WTC11 (cell line): ENCODE measurements at regions of chr15 and their contacts with region 1.

Region 1: DNA sequence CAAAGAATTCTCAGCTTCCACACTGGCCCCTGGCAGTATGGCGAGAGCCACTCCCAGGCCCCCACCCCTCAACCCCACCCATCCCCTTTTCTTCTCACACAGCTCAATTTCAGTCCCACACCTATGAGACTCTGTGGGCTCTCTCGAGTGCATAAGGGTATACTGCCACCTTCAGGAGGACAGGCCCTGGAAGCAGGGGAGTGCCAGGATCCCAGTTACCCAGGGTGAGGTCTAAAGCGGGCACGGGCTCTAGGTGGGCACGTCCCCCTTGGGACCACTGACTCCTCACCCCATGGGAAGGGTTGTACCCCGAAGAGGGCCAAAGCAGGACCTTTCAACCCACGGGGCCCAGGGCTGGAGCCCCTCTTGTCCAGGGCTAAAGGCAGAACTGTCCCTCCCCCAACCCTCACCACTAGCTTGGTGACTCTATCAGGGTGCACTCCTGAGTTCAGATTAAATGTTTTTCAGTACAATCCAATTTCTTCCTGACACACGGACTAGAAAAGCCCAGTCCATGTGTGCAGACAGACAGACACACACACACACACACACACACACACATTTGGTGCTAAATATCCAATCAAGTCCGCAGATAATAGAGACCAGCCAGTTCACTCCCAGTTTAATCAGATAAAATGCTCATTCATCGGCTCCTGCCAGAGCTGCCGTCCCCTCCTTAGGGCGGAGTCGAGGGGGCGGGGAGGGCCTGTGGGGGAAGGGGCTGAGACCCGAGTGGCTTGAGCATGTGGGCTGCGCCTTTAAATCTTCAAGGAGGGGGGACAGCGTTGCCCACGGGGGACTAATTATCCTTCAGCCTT is 59.4 kb downstream of the CYP11A1 start:
- DNase-seq: peak; percentile 63
- ATAC-seq: peak; percentile 66
- H3K4me3 Mint-ChIP-seq: peak overlapping the region; percentile 31
- H3K27ac Mint-ChIP-seq: no peak overlapping the region
- H3K4me1 Mint-ChIP-seq: peaks cover 71% of the 10 kb centered on the region
- H3K27me3 Mint-ChIP-seq: peaks cover 32% of the 10 kb centered on the region
- CTCF ChIP-seq: peak; percentile 16; the same call in 1 of the 2 replicates

Region 2: GRCh38 chr15:74127260-74127953 is 180.6 kb before region 1 on chr15:
- CTCF ChIA-PET with region 1: interaction called, 89 read pairs
- POLR2A ChIA-PET with region 1: interaction called, 4 read pairs
- DNase-seq: peak; percentile 98
- ATAC-seq: peak; percentile 69
- H3K4me3 Mint-ChIP-seq: peak overlapping the region; percentile 73
- H3K27ac Mint-ChIP-seq: no peak overlapping the region
- H3K4me1 Mint-ChIP-seq: peaks cover 60% of the 10 kb centered on the region
- H3K27me3 Mint-ChIP-seq: peaks cover 76% of the 10 kb centered on the region
- CTCF ChIP-seq: peak; percentile 99

Region 3: GRCh38 chr15:74172701-74173379 is 135.2 kb before region 1 on chr15:
- CTCF ChIA-PET with region 1: interaction called, 21 read pairs
- POLR2A ChIA-PET with region 1: no interaction called
- DNase-seq: peak; percentile 36
- ATAC-seq: peak; percentile 23
- H3K4me3 Mint-ChIP-seq: no peak overlapping the region
- H3K27ac Mint-ChIP-seq: no peak overlapping the region
- H3K4me1 Mint-ChIP-seq: peaks cover 53% of the 10 kb centered on the region
- H3K27me3 Mint-ChIP-seq: peaks cover 3% of the 10 kb centered on the region; the same call in 1 of the 2 replicates
- CTCF ChIP-seq: no peak

Region 4: DNA sequence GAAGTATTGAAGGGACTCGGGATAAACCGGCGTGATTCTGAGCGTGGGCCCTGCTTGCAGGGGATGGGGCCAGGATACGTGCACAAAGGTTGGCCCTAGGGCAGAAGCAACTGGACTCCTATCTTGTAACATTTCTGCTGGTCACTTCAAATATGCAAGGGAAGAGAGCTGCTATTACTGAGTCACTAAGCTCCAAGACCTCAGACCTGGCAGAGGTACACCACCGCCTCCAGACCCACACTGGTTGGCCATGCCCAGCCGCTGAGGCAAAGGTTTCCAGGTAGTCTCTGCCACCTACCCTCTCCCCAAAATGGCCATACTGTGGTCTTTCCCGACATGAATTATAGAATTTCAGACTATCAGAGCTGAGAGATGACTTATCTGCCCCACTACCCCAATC is 92.1 kb before region 1 on chr15:
- CTCF ChIA-PET with region 1: interaction called, 53 read pairs
- POLR2A ChIA-PET with region 1: interaction called, 4 read pairs
- DNase-seq: no peak
- ATAC-seq: no peak
- H3K4me3 Mint-ChIP-seq: no peak overlapping the region
- H3K27ac Mint-ChIP-seq: no peak overlapping the region
- H3K4me1 Mint-ChIP-seq: peaks cover 65% of the 10 kb centered on the region
- H3K27me3 Mint-ChIP-seq: peaks cover 52% of the 10 kb centered on the region
- CTCF ChIP-seq: no peak

Region 5: DNA sequence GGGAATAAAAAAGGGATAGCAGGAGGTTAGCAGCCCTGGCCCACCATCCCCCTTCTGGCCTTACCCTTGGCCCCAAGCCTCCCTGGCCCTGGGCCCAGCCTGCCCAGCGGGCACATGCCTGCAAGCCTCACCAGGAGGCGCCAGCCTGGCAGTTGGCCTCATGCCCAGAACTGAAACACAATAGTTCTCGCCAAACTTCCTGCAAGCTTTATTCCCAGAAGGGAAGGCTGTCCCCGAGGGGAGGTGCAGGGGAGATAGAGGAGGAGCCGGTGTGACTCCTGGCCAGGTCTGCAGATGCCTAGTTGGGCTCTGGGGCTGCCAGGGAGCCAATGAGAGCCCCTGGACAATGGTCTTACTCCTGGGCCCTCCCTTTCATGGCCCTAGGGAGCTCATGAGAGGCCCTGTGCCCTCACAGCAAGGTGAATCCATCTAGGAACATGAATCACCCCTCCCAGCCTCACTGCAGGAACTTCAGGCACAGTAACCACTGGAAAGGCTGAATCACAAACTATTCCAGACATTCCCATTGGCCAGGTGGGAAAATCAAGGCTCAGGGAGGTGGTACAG is 68.0 kb before region 1 on chr15:
- CTCF ChIA-PET with region 1: interaction called, 25 read pairs
- POLR2A ChIA-PET with region 1: no interaction called
- DNase-seq: peak; percentile 23
- ATAC-seq: peak; percentile 64
- H3K4me3 Mint-ChIP-seq: no peak overlapping the region
- H3K27ac Mint-ChIP-seq: no peak overlapping the region
- H3K4me1 Mint-ChIP-seq: peaks cover 42% of the 10 kb centered on the region
- H3K27me3 Mint-ChIP-seq: peaks cover 25% of the 10 kb centered on the region
- CTCF ChIP-seq: no peak

Region 6: GRCh38 chr15:74322181-74323076 is 14.4 kb after region 1 on chr15:
- CTCF ChIA-PET with region 1: interaction called, 347 read pairs
- POLR2A ChIA-PET with region 1: interaction called, 3 read pairs
- DNase-seq: peak; percentile 85
- ATAC-seq: peak; percentile 68
- H3K4me3 Mint-ChIP-seq: no peak overlapping the region
- H3K27ac Mint-ChIP-seq: no peak overlapping the region
- H3K4me1 Mint-ChIP-seq: peaks cover 43% of the 10 kb centered on the region
- H3K27me3 Mint-ChIP-seq: no peaks in the 10 kb centered on the region; the same call in none of the 2 replicates
- CTCF ChIP-seq: peak; percentile 66

Region 7: GRCh38 chr15:74387576-74388352 is 79.7 kb after region 1 on chr15:
- CTCF ChIA-PET with region 1: no interaction called
- POLR2A ChIA-PET with region 1: no interaction called
- DNase-seq: no peak
- ATAC-seq: peak; percentile 40
- H3K4me3 Mint-ChIP-seq: no peak overlapping the region
- H3K27ac Mint-ChIP-seq: no peak overlapping the region
- H3K4me1 Mint-ChIP-seq: peaks cover 16% of the 10 kb centered on the region
- H3K27me3 Mint-ChIP-seq: no peaks in the 10 kb centered on the region
- CTCF ChIP-seq: no peak

Region 8: GRCh38 chr15:74417246-74417645 is 109.2 kb after region 1 on chr15:
- CTCF ChIA-PET with region 1: no interaction called
- POLR2A ChIA-PET with region 1: no interaction called
- DNase-seq: no peak
- ATAC-seq: no peak
- H3K4me3 Mint-ChIP-seq: no peak overlapping the region
- H3K27ac Mint-ChIP-seq: no peak overlapping the region
- H3K4me1 Mint-ChIP-seq: peaks cover 14% of the 10 kb centered on the region
- H3K27me3 Mint-ChIP-seq: no peaks in the 10 kb centered on the region
- CTCF ChIP-seq: no peak

Region 9: GRCh38 chr15:74695597-74696397 is 387.8 kb after region 1 on chr15 and contains the start of gene EDC3:
- CTCF ChIA-PET with region 1: no interaction called
- POLR2A ChIA-PET with region 1: no interaction called
- DNase-seq: peak; percentile 87
- ATAC-seq: peak; percentile 91
- H3K4me3 Mint-ChIP-seq: peak within 1 kb of the TSS; percentile 100
- H3K27ac Mint-ChIP-seq: peak within 1 kb of the TSS; percentile 99
- H3K4me1 Mint-ChIP-seq: peaks cover 11% of the 10 kb centered on the region
- H3K27me3 Mint-ChIP-seq: peaks cover 9% of the 10 kb centered on the region
- CTCF ChIP-seq: no peak
- total RNA-seq, gene EDC3: 45.6 to 54.7 TPM (median 50.6 TPM) in 3 replicates